ENCODE measurements at regions of chr4 and their contacts with region 1.

Region 1: DNA sequence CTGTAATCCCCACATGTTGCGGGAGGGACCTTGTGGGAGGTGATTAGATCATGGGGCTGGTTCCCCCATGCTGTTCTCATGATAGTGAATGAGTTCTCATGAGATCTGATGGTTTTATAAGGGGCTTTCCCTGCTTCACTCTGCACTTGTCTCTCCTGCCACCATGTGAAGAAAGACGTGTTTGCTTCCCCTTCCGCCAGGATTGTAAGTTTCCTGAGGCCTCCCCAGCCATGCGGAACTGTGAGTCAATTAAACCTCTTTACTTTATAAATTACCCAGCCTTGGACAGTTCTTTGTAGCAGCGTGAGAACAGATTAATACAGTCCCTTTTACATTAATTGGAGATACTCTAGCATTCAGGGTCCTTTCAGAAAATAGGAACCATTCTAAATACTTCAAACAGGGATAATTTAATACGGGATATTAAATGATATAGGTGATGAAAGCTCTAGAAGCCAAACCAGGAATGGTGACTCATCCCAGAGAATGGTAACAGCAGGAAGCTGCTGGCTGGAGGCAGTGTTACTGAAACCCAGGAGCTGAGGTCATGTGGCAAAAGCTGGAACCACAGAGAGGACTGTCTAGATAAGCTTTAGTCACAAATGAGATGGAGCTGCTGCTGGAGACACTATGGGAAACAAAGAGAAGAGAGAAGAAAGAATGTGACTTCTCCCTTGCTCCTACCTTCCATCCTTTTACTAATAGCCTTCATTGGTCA is 57.3 kb downstream of the GSTCD start:
- DNase-seq: peak; percentile 55 to 71
- ATAC-seq: peak; percentile 100
- H3K4me3 ChIP-seq: peak overlapping the region in 1 of 4 donors; percentile 18
- H3K27ac ChIP-seq: peak overlapping the region; percentile 53 to 64 (median 58)
- H3K4me1 ChIP-seq: peaks cover 0 to 5% of the 10 kb centered on the region in 2 donors
- H3K27me3 ChIP-seq: no peaks in the 10 kb centered on the region
- CTCF ChIP-seq: no peak
- POLR2A ChIP-seq: no peak

Region 2: GRCh38 chr4:105369988-105370387 is 395.9 kb before region 1 on chr4:
- in situ Hi-C with region 1: no loop called
- intact Hi-C with region 1: no loop called
- DNase-seq: no peak
- ATAC-seq: no peak
- H3K4me3 ChIP-seq: no peak overlapping the region
- H3K27ac ChIP-seq: no peak overlapping the region
- H3K4me1 ChIP-seq: peaks cover 0 to 13% of the 10 kb centered on the region in 2 donors
- H3K27me3 ChIP-seq: no peaks in the 10 kb centered on the region
- CTCF ChIP-seq: no peak
- POLR2A ChIP-seq: no peak

Region 3: GRCh38 chr4:105990939-105991338 is 225.1 kb after region 1 on chr4:
- in situ Hi-C with region 1: no loop called
- intact Hi-C with region 1: loop called (anchors 5 kb)
- DNase-seq: peak; percentile 92 to 97
- ATAC-seq: peak; percentile 97 to 98
- H3K4me3 ChIP-seq: no peak overlapping the region
- H3K27ac ChIP-seq: peak overlapping the region; percentile 79 to 91 (median 82)
- H3K4me1 ChIP-seq: peaks cover 24 to 34% of the 10 kb centered on the region in 2 donors
- H3K27me3 ChIP-seq: no peaks in the 10 kb centered on the region
- CTCF ChIP-seq: no peak
- POLR2A ChIP-seq: no peak

Measured in gastrocnemius medialis (tissue), 4 donors.